Calu3 (cell line): ENCODE measurements at regions of chr6 and their contacts with region 1.

Region 1: GRCh38 chr6:44084231-44085014 is 42.8 kb downstream of the MRPL14 start:
- DNase-seq: no peak
- H3K4me3 Mint-ChIP-seq: no peak overlapping the region
- H3K27ac Mint-ChIP-seq: no peak overlapping the region
- H3K4me1 Mint-ChIP-seq: peaks cover 10% of the 10 kb centered on the region
- H3K27me3 Mint-ChIP-seq: no peaks in the 10 kb centered on the region
- CTCF ChIP-seq: no peak

Region 2: GRCh38 chr6:43737272-43738081 is 346.9 kb before region 1 on chr6:
- CTCF ChIA-PET with region 1: interaction called, 15 read pairs
- intact Hi-C with region 1: no loop called
- DNase-seq: no peak
- H3K4me3 Mint-ChIP-seq: no peak overlapping the region
- H3K27ac Mint-ChIP-seq: peak overlapping the region; percentile 3
- H3K4me1 Mint-ChIP-seq: peaks cover 41% of the 10 kb centered on the region
- H3K27me3 Mint-ChIP-seq: no peaks in the 10 kb centered on the region
- CTCF ChIP-seq: no peak

Region 3: GRCh38 chr6:44268095-44268628 is 183.7 kb after region 1 on chr6:
- CTCF ChIA-PET with region 1: no interaction called
- intact Hi-C with region 1: no loop called
- DNase-seq: peak; percentile 77
- H3K4me3 Mint-ChIP-seq: no peak overlapping the region
- H3K27ac Mint-ChIP-seq: no peak overlapping the region
- H3K4me1 Mint-ChIP-seq: peaks cover 16% of the 10 kb centered on the region
- H3K27me3 Mint-ChIP-seq: peaks cover 71% of the 10 kb centered on the region
- CTCF ChIP-seq: peak; percentile 88

Region 4: GRCh38 chr6:44512868-44513741 is 428.7 kb after region 1 on chr6:
- CTCF ChIA-PET with region 1: no interaction called
- intact Hi-C with region 1: no loop called
- DNase-seq: peak; percentile 14
- H3K4me3 Mint-ChIP-seq: no peak overlapping the region
- H3K27ac Mint-ChIP-seq: no peak overlapping the region
- H3K4me1 Mint-ChIP-seq: no peaks in the 10 kb centered on the region
- H3K27me3 Mint-ChIP-seq: peaks cover 27% of the 10 kb centered on the region
- CTCF ChIP-seq: no peak